ENCODE measurements at regions of chr17 and their contacts with region 1.

Region 1: DNA sequence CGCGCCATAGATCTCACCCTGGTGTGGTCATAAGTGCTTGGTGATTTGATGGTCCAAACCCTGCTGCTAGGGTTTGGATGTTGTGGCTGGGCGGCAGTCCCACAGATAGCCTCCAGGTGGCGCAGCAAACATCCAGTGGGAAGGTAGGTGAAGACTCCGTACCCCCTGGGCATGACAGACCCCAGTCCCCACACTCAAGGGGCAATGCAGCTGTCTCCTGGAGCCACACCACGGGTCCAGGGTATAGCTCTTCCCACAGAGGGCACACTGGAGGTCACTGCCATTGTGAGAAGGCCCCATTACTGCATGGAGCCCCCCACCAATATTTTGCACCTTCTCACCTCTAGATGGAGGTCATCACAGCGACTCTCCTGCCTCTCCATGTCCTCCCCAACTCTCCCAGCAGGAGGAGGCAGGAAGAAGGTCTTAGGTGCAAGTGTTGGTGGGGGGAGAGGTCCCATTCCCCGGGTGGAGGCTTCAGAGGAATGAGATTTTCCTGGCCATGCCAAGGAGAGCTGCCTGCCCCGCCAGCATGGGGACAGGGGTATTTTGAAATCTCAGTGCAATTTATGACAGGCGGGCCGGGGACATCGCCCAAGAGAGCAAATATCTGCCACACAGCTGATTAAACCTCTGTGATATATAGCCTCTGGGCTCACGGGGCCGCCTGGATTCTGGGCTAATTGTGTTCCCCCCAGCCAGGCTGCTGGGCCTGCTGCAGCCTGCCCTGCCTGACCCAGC is 17.1 kb upstream of the C17orf113 start:
- DNase-seq: no peak
- H3K4me3 ChIP-seq: no peak overlapping the region
- CTCF ChIP-seq: peak; percentile 89

Region 2: DNA sequence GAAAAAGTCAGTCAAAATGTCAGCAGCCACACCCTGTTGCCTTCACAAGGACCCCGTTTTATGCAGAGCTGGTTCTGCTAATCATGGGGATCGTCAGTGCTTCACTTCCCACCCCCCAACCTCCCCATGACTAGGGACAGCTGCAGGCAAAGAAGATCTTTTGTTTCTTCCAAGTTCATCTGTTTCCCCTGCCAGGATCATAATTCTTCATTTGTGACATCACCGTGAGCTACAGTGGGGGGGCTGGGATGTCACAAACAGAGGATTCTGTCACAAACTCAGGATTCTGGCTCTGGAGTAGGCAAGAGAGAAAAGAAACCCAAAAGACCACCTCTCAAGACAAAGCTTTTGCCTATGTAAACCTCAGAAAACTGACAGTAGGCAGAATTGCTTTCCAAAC is 74.9 kb before region 1 on chr17:
- CTCF ChIA-PET with region 1: no interaction called
- POLR2A ChIA-PET with region 1: no interaction called
- DNase-seq: no peak
- H3K4me3 ChIP-seq: no peak overlapping the region
- CTCF ChIP-seq: no peak

Region 3: GRCh38 chr17:42027961-42028790 is 39.3 kb before region 1 on chr17:
- CTCF ChIA-PET with region 1: interaction called, 19 read pairs
- POLR2A ChIA-PET with region 1: no interaction called
- DNase-seq: no peak
- H3K4me3 ChIP-seq: no peak overlapping the region
- CTCF ChIP-seq: peak; percentile 5

Region 4: GRCh38 chr17:42055496-42055895 is 12.0 kb before region 1 on chr17:
- CTCF ChIA-PET with region 1: interaction called, 26 read pairs
- POLR2A ChIA-PET with region 1: no interaction called
- DNase-seq: no peak
- H3K4me3 ChIP-seq: no peak overlapping the region
- CTCF ChIP-seq: no peak

Region 5: DNA sequence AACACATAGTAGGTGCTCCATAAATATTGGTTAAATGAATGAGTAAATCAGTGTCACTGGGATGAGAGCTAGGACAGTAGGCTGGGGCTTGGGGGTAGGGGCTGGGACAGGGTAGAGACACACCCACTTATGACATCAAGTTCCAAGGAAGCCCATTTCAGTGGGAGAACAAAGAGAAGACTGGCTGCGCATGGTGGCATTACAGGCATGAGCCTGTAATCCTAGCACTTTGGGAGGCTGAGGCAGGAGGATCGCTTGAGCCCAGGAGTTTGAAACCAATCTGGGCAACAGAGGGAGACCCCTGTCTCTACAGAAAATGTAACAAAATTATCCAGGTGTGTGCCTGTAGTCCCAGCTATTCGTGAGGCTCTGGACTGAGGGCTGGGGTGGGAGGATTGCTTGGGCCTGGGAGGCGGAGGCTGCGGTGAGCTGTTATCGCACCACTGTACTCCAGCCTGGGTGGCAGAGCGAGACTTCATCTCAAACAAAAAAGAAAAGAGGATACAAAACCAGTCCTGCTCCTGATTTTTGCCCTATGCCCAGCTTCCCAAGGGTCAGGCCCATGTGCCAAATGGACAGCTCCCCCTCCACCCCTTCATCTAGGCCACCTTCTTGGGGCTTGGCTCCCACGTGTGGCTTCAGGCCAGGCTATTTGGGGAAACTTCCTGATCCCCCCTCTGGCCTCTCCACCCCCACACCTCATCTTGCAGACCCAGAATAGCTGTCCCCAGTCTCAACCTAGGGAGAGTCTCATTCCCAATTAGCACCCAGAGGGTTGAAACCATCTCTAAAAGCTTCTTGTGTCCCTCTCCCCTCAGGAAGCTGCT is 23.7 kb after region 1 on chr17:
- CTCF ChIA-PET with region 1: interaction called, 14 read pairs
- POLR2A ChIA-PET with region 1: no interaction called
- DNase-seq: no peak
- H3K4me3 ChIP-seq: no peak overlapping the region
- CTCF ChIP-seq: no peak

Region 6: DNA sequence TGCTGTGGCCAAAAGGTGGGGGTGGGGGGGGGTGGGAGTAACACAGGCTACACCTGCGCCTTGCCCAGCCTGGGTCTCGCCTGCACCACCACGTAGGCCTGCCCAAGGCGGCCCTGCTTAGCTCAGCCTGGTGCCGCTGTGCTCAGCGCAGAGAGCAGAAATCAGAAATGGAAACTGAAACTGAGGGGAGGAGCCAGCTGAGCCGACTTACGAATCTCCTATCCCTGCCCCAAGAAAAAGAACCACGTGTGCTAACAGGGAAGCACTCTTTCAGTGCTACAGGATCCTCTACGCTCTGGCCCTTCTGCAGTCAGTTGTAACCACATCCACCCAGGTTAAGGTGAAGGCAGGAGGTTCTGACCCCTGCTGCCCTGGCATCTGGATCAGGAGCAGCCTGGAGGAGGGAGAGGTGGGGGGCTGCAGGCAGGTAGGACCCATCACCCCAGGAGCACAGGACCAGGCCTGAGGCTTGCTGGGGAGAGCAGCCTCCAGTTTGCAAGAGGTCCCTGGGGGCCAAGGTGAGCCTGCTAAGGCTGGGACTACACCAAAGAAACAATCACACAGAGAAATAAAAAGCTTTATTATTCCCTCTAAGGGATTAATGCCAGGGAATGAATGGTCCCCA is 45.1 kb after region 1 on chr17 and contains the start of gene DHX58:
- CTCF ChIA-PET with region 1: interaction called, 43 read pairs
- POLR2A ChIA-PET with region 1: no interaction called
- DNase-seq: peak; percentile 36
- H3K4me3 ChIP-seq: peak within 1 kb of the TSS; percentile 55
- CTCF ChIP-seq: no peak

Region 7: GRCh38 chr17:42212382-42212781 is 144.9 kb after region 1 on chr17:
- CTCF ChIA-PET with region 1: no interaction called
- POLR2A ChIA-PET with region 1: no interaction called
- DNase-seq: no peak
- H3K4me3 ChIP-seq: no peak overlapping the region
- CTCF ChIP-seq: no peak